GM12878 (cell line): ENCODE measurements at regions of chr10 and their contacts with region 1.

Region 1: DNA sequence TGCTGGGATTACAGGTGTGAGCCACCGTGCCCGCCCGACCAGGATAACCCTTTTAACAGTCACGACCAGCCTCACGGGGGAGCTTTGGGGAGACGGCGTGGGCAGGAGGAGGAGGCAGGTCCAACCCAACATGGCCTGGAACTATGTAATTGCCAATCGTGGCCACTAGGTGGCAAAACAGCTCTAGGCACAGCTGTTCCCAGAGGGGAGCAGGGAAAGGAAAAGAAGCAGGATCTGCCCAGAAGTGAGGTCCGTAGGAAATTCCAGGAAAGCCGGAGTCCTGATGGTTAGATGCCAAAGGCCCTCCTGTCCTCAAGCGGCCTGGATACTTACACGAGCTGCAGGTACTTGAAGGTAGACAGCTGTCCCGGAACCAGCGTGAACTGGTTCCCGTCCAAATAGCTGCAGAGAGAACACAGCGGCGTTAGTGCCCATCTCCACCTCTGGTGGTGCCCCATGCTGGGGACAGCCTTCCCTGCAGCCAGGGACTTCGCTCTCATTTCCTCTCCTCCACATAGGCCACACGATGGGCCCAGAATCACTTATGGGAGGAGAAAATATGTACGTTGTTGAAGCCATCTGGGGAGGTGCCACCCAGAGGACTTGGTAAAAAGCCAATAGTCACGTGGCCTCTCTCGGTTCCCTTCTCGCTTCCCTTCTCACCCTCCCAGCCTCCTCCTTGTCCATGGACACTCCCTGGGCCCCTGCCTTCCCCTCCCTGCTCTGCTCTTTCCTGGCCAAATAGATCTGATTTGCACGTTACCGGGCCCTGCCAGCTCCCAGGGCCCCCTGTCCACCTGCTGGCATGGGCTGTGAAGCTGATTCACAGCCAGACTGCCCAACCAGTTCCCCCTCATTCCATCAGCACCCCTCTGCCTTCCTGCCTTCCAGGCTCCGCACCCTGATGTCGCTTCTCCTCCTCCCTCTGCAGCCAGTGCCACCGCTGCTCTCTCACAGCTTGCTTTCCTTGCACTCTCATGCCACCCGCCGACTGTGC is 148.1 kb downstream of the SLIT1 start:
- DNase-seq: peak; percentile 34
- ATAC-seq: peak; percentile 96
- H3K4me3 ChIP-seq: peak overlapping the region; percentile 35; the same call in 1 of the 2 replicates
- H3K27ac ChIP-seq: no peak overlapping the region
- H3K4me1 ChIP-seq: peaks cover 7% of the 10 kb centered on the region
- H3K27me3 ChIP-seq: peaks cover 0 to 3% of the 10 kb centered on the region in 2 experiments; a peak in 2 of 4 replicates
- CTCF ChIP-seq: peak; percentile 78 to 95 (median 87)
- EP300 ChIP-seq: no peak
- POLR2A ChIP-seq: no peak
- RAD21 ChIP-seq: peak; percentile 71

Region 2: GRCh38 chr10:96910488-96911395 is 126.9 kb before region 1 on chr10:
- CTCF ChIA-PET with region 1: interaction called, 25 read pairs
- POLR2A ChIA-PET with region 1: no interaction called
- RAD21 ChIA-PET with region 1: interaction called, 4 read pairs
- SMC1A ChIA-PET with region 1: interaction called, 7 read pairs
- in situ Hi-C with region 1: no loop called
- intact Hi-C with region 1: no loop called
- DNase-seq: peak; percentile 28
- ATAC-seq: peak; percentile 84
- H3K4me3 ChIP-seq: no peak overlapping the region
- H3K27ac ChIP-seq: peak overlapping the region; percentile 24; the same call in 1 of the 2 replicates
- H3K4me1 ChIP-seq: 0 out of 2 replicates have a peak, but pooled peaks cover 3% of the 10 kb centered on the region
- H3K27me3 ChIP-seq: no peaks in the 10 kb centered on the region
- CTCF ChIP-seq: peak; percentile 65 to 67 (median 66)
- EP300 ChIP-seq: no peak
- POLR2A ChIP-seq: no peak
- RAD21 ChIP-seq: peak; percentile 69

Region 3: DNA sequence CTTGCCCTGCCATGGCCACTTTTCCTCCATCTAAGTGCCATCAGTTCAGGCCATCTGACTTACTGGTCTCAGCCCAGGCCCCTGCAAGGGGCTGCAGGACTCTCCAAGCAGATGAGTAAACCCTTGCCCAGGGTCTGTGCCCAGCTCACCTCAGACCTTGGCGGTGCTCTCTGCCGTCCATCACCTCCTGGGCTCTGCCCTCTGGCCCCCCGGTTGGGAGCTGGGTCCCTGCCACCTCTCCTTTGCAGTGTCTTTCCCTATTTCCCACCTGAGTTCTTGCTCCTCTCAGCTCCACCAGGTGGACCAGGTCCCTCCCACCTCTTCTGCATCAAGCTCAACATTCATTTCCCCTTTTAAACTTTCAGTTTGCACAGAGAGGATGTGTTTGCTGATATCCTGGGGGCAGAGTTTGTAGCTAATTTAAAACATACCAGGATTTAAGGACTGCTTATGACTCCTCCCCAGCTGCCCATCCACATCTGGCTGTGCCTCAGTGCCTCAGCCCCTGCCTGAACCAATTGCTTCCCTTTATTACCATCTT is 12.6 kb after region 1 on chr10:
- CTCF ChIA-PET with region 1: interaction called, 16 read pairs
- POLR2A ChIA-PET with region 1: no interaction called
- RAD21 ChIA-PET with region 1: interaction called, 9 read pairs
- SMC1A ChIA-PET with region 1: no interaction called
- in situ Hi-C with region 1: no loop called
- intact Hi-C with region 1: no loop called
- DNase-seq: no peak
- ATAC-seq: peak; percentile 60
- H3K4me3 ChIP-seq: no peak overlapping the region
- H3K27ac ChIP-seq: no peak overlapping the region
- H3K4me1 ChIP-seq: peaks cover 8% of the 10 kb centered on the region
- H3K27me3 ChIP-seq: no peaks in the 10 kb centered on the region
- CTCF ChIP-seq: no peak
- EP300 ChIP-seq: no peak
- POLR2A ChIP-seq: no peak
- RAD21 ChIP-seq: no peak

Region 4: DNA sequence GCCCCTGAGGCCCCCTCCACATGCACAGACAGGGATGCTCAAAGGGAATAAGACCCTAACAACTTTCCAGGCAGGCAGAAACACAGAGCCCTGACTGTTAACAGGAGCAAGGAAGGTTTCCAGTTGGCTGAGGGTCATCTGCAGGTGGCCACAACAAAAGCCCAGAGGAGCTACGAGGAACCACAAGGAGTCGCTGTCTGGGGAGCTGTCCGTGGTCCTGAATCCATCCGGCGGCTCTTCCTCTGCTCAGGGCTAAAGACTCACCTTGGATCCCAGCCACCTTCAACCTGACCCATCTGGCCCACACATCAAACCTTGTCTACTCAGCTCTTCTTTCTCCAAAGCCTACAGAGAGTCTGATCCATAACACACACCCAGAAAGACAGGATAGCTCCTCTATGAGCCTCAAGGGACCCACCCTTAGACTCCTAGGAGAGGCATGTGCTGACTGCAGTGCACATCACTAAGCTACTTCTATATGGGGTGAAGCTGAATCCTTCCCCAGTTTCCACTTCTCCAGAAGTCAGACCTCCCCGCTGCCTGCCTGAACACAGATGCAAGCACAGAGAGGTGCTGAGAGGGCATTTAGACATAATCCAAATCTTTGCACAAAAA is 44.1 kb after region 1 on chr10:
- CTCF ChIA-PET with region 1: interaction called, 16 read pairs
- POLR2A ChIA-PET with region 1: no interaction called
- RAD21 ChIA-PET with region 1: no interaction called
- SMC1A ChIA-PET with region 1: interaction called, 4 read pairs
- in situ Hi-C with region 1: no loop called
- intact Hi-C with region 1: no loop called
- DNase-seq: no peak
- ATAC-seq: peak; percentile 93
- H3K4me3 ChIP-seq: no peak overlapping the region
- H3K27ac ChIP-seq: no peak overlapping the region
- H3K4me1 ChIP-seq: no peaks in the 10 kb centered on the region
- H3K27me3 ChIP-seq: no peaks in the 10 kb centered on the region; a peak in 1 of 4 replicates
- CTCF ChIP-seq: peak; percentile 88 to 90 (median 90)
- EP300 ChIP-seq: no peak
- POLR2A ChIP-seq: no peak
- RAD21 ChIP-seq: peak; percentile 68

Region 5: DNA sequence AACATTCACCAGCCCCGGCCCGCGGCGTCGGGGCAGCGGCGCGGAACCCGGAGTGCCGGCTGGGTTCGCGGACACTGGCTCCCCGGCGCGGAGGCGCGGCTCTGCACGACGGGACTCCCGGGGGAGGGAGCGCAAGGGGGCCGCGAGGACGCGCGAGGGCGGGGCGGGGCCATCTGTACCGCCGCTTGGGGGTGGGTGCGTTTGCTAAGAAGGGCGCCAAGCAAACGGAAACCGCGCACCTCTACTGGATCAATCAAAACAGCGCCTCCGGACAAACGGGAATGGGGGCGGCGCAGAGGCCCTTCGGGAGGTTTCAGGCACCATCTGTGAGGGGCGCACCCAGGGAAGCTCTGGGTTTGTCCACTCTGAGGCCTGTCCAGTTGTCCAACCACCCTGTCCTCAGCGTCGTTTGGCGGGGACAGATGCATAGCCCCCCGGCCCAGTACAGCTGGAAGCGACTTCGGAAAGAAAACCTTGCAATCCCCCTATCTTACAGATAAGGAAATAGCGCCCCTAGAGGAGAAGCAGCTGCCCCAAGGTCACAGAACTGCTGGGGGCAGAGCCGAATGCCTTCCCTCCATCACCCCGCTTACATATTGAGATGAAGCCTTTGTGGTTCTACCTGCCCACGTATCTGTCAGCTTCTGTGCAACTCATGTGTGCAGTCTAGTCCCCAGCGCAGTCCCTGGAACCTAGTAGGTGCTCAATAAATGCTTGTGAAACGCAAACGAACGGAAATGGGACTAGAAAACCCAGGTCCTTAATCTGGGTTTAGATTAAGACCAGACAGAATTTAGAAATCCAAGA is 158.8 kb after region 1 on chr10:
- CTCF ChIA-PET with region 1: interaction called, 32 read pairs
- POLR2A ChIA-PET with region 1: no interaction called
- RAD21 ChIA-PET with region 1: interaction called, 8 read pairs
- SMC1A ChIA-PET with region 1: interaction called, 5 read pairs
- in situ Hi-C with region 1: no loop called
- intact Hi-C with region 1: no loop called
- DNase-seq: no peak
- ATAC-seq: peak; percentile 91
- H3K4me3 ChIP-seq: peak overlapping the region; percentile 79
- H3K27ac ChIP-seq: no peak overlapping the region
- H3K4me1 ChIP-seq: peaks cover 14% of the 10 kb centered on the region
- H3K27me3 ChIP-seq: no peaks in the 10 kb centered on the region; a peak in 1 of 4 replicates
- CTCF ChIP-seq: peak; percentile 76 to 94 (median 81)
- EP300 ChIP-seq: no peak
- POLR2A ChIP-seq: no peak
- RAD21 ChIP-seq: peak; percentile 63

Region 6: GRCh38 chr10:97217299-97217698 is 179.6 kb after region 1 on chr10:
- CTCF ChIA-PET with region 1: interaction called, 67 read pairs
- POLR2A ChIA-PET with region 1: no interaction called
- RAD21 ChIA-PET with region 1: no interaction called
- SMC1A ChIA-PET with region 1: interaction called, 3 read pairs
- in situ Hi-C with region 1: no loop called
- intact Hi-C with region 1: no loop called
- DNase-seq: no peak
- ATAC-seq: no peak
- H3K4me3 ChIP-seq: no peak overlapping the region
- H3K27ac ChIP-seq: no peak overlapping the region
- H3K4me1 ChIP-seq: peaks cover 7% of the 10 kb centered on the region; the same call in 1 of the 2 replicates
- H3K27me3 ChIP-seq: no peaks in the 10 kb centered on the region
- CTCF ChIP-seq: no peak
- EP300 ChIP-seq: no peak
- POLR2A ChIP-seq: no peak
- RAD21 ChIP-seq: no peak